Uterus (tissue), 4 donors: ENCODE measurements at regions of chr1 and their contacts with region 1.

Region 1: GRCh38 chr1:156385534-156386031 is 16.6 kb downstream of the RHBG start:
- DNase-seq: peak; percentile 47 to 56
- H3K4me3 ChIP-seq: no peak overlapping the region
- H3K27ac ChIP-seq: no peak overlapping the region
- H3K4me1 ChIP-seq: peaks cover 0 to 4% of the 10 kb centered on the region in 2 donors
- H3K27me3 ChIP-seq: no peaks in the 10 kb centered on the region
- CTCF ChIP-seq: peak; percentile 78 to 86 (median 80)
- POLR2A ChIP-seq: no peak

Region 2: DNA sequence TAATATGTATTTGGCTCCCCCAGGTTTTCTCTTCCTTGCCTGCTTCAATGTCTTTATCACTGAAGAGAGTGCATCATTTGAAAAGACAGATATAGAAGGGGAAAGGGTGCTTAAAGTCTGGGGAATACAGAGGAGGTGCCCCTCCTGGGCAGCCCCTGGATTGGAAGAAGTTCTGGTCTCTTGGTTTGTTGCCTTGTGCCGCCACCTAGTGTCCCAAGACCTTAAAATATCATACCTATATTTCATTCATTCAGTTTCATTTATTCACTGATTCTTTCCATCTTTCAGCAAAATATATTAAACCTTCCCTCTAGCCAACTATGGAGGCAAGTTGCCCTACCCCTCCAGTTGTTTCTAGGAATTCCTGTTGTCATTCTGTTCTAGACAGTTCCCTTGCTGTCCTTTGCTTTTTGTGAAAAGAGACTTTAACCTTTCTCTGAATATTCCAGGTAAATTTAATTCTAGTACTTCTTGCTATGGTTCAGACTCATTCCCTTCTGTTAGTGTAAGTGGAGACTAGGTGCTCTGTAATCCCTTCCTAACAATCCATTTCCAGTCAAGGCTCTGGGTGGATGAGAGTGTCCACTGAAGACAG is 58.9 kb after region 1 on chr1:
- intact Hi-C with region 1: loop called (anchors 5 kb)
- DNase-seq: no peak
- H3K4me3 ChIP-seq: no peak overlapping the region
- H3K27ac ChIP-seq: no peak overlapping the region
- H3K4me1 ChIP-seq: peaks cover 0 to 2% of the 10 kb centered on the region in 2 donors
- H3K27me3 ChIP-seq: peaks cover 0 to 18% of the 10 kb centered on the region in 2 donors
- CTCF ChIP-seq: no peak
- POLR2A ChIP-seq: no peak

Region 3: DNA sequence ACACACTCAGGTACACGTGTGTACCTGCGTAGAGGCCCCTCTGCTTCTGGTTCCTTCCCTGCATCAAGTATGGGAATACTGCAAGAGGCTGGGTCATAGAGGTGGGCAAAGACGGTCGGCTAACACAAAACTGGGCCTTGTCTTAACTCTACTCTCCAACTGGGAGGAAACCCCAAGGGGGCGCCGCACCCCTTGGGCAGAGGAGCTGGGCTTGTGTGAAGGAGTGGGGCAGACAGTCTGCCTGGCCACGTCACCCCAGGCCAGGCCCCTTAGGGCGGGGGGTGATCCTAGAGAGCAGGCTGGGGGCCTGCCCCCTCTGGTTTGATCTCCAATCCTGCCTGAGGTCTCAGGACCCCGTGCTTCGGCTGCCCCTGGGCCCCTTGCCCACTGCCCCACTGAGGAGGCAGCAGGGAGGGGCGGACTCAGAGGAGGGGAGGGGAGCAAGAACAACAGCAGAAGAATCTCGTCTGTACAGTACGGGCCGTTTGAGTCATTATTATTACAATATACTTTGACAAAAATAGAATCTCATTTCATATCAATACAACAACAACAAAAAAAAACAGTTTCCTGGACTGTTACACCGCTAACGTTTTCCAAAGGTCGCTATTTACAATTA is 80.3 kb after region 1 on chr1:
- intact Hi-C with region 1: no loop called
- DNase-seq: no peak
- H3K4me3 ChIP-seq: no peak overlapping the region
- H3K27ac ChIP-seq: peak overlapping the region; percentile 75 to 90
- H3K4me1 ChIP-seq: peaks cover 7 to 18% of the 10 kb centered on the region in 2 donors
- H3K27me3 ChIP-seq: no peaks in the 10 kb centered on the region
- CTCF ChIP-seq: no peak
- POLR2A ChIP-seq: no peak

Region 4: DNA sequence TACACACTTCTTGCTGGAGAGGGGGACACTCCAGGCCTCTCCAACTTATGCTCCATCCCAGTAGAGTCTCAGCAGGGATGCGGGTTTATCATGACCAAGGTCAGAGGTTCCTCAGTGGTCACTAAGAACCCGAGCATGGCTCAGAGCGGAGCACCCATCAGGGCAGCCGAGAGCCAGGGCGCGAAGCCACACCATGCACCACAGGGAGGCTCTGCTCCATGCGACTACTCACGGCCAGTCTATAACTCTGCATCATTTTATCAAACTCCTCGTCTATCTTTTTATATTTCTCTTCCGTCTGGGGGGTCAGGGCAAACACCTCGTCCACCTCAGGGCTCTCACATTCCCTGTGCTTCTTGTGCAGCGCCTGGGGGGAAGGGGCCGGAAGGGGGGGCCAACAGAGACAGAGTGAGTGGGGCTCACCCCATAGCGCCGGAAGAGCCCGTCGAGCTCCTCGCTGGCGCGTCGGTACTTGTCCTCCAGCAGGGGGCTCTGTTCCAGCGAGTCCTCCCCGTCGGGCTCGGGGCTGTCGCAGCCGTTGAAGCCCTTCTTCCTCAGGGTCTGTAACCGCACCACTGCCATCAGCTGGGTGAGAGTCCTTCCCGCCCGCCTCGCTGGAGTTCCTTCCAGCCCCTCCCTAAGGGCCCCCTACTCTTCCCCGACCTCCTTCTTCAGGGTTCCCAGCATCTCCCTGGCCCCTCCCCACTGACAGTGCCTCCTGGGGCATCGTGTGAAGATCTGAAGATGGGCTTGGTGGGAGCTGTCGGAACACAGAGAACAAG is 95.0 kb after region 1 on chr1:
- intact Hi-C with region 1: no loop called
- DNase-seq: peak; percentile 55 to 67
- H3K4me3 ChIP-seq: no peak overlapping the region
- H3K27ac ChIP-seq: peak overlapping the region; percentile 92 to 98
- H3K4me1 ChIP-seq: peaks cover 25 to 26% of the 10 kb centered on the region in 2 donors
- H3K27me3 ChIP-seq: no peaks in the 10 kb centered on the region
- CTCF ChIP-seq: peak; percentile 54 to 67 (median 60)
- POLR2A ChIP-seq: no peak